Left lung (tissue), 14 donors: ENCODE measurements at regions of chr20 and their contacts with region 1.

Region 1: GRCh38 chr20:59222253-59223181 is 58.9 kb downstream of the ZNF831 start:
- DNase-seq: peak; percentile 68 to 97 (median 78)
- ATAC-seq: peak; percentile 99
- H3K4me3 ChIP-seq: peak overlapping the region; percentile 51
- H3K27ac ChIP-seq: peak overlapping the region in 1 of 2 donors; percentile 41
- H3K4me1 ChIP-seq: peaks cover 3 to 21% of the 10 kb centered on the region in 2 donors
- H3K27me3 ChIP-seq: peaks cover 23 to 65% of the 10 kb centered on the region in 2 donors
- CTCF ChIP-seq: peak; percentile 95 to 96

Region 2: DNA sequence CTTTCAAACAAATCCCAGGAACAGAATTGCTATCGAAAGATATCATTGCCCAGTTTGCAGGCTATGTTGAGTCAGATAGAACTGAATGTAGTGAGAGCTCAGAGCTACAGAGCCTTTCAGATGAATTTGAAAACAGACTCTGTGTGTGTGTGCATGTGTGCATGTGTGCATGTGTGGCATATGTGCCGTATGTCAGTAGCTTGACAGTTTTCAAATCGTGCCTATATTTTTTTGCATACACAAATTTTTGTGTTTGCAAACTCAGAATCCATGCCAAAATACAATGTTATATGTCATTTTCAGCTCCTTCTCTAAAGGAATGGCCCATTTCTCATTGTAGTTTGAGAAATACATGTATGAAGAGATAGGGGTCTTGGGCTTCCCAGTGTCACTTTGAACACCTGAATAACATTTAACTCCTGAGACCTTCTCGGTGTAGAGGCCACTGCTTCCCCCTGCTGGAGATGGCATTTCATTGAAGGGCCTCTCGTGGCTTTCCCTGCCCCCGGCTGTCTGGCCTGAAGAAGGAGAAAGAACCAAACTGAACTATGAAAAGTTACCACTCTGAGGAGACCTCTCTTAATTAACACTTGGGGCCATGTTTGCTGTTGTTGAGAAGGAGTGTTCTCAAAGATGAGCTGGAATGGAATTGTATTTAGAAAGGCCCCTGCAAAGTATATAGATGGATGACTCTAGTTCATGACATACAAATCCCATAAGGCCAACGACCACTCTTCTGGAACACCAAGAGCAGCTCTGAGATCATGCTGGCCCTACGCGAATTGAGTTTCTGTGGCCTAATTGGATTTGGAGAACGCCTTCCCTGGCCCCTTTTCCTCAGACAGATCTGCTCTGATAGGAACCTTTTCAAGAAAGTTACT is 774.8 kb before region 1 on chr20:
- intact Hi-C with region 1: no loop called
- DNase-seq: peak in 1 of 4 donors; percentile 33
- ATAC-seq: peak; percentile 95
- H3K4me3 ChIP-seq: no peak overlapping the region
- H3K27ac ChIP-seq: no peak overlapping the region
- H3K4me1 ChIP-seq: no peaks in the 10 kb centered on the region
- H3K27me3 ChIP-seq: no peaks in the 10 kb centered on the region
- CTCF ChIP-seq: peak; percentile 42 to 45

Region 3: GRCh38 chr20:58868795-58869194 is 353.7 kb before region 1 on chr20:
- intact Hi-C with region 1: loop called (anchors 5 to 10 kb)
- DNase-seq: no peak
- ATAC-seq: no peak
- H3K4me3 ChIP-seq: no peak overlapping the region
- H3K27ac ChIP-seq: no peak overlapping the region
- H3K4me1 ChIP-seq: no peaks in the 10 kb centered on the region
- H3K27me3 ChIP-seq: peaks cover 0 to 11% of the 10 kb centered on the region in 2 donors
- CTCF ChIP-seq: no peak

Region 4: GRCh38 chr20:59087829-59088433 is 134.6 kb before region 1 on chr20:
- intact Hi-C with region 1: loop called in 1 of 2 experiments (anchors 5 kb)
- DNase-seq: peak; percentile 56 to 91 (median 78)
- ATAC-seq: peak; percentile 97
- H3K4me3 ChIP-seq: no peak overlapping the region
- H3K27ac ChIP-seq: no peak overlapping the region
- H3K4me1 ChIP-seq: peaks cover 0 to 4% of the 10 kb centered on the region in 2 donors
- H3K27me3 ChIP-seq: peaks cover 0 to 8% of the 10 kb centered on the region in 2 donors
- CTCF ChIP-seq: peak; percentile 87 to 96

Region 5: DNA sequence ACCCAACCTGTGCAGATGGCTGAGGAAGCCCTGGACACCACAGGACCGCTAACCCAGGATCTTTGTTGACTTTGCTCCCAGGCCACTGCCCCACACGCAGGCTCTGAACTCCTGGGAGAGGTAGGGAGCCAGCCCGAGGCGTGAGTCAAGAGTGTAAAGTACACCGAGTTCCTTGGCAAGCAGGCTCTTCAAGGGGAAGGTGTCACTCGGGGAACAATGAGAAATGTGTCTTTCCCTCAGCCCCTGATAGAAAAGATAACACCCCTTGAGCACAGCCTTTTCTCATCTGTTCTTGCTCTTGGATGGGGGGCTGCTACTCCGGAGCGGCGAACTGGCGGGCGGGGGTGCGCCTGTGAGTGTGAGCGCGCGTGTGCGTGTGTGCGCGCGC is 77.4 kb after region 1 on chr20:
- intact Hi-C with region 1: no loop called
- DNase-seq: peak in 1 of 4 donors; percentile 43
- ATAC-seq: no peak
- H3K4me3 ChIP-seq: no peak overlapping the region
- H3K27ac ChIP-seq: no peak overlapping the region
- H3K4me1 ChIP-seq: peaks cover 0 to 8% of the 10 kb centered on the region in 2 donors
- H3K27me3 ChIP-seq: peaks cover 24 to 95% of the 10 kb centered on the region in 2 donors
- CTCF ChIP-seq: no peak

Region 6: GRCh38 chr20:59583428-59584045 is 361.0 kb after region 1 on chr20:
- intact Hi-C with region 1: no loop called
- DNase-seq: peak in 2 of 4 donors; percentile 59 to 74
- ATAC-seq: peak; percentile 14
- H3K4me3 ChIP-seq: no peak overlapping the region
- H3K27ac ChIP-seq: no peak overlapping the region
- H3K4me1 ChIP-seq: no peaks in the 10 kb centered on the region
- H3K27me3 ChIP-seq: peaks cover 2 to 66% of the 10 kb centered on the region in 2 donors
- CTCF ChIP-seq: no peak